Cardiac septum (tissue), 1 donor: ENCODE measurements at regions of chr17 and their contacts with region 1.

Region 1: GRCh38 chr17:36183001-36183971 is 6.8 kb upstream of the TBC1D3B start:
- DNase-seq: no peak

Region 2: GRCh38 chr17:36117505-36118382 is 65.5 kb before region 1 on chr17:
- intact Hi-C with region 1: loop called (anchors 10 kb)
- DNase-seq: no peak

Region 3: DNA sequence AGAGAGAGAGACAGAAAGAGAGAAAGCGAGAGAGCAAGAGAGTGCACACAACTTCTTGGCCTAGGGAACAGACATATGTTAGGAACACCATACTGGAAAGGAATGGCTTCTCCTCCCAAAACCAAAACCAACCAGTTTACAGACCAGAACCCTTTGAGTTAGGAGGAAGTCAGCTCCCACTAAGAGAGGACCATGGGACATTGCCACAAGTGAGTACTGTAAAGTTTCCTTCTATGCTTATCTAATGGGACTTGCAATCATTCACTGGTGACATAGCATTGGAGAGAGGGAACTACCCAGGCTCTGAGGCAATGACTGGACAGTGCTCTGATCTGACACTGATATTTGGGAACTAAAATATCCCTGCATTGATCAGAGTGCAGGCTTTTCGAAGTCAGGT is 39.3 kb before region 1 on chr17:
- intact Hi-C with region 1: no loop called
- DNase-seq: no peak

Region 4: DNA sequence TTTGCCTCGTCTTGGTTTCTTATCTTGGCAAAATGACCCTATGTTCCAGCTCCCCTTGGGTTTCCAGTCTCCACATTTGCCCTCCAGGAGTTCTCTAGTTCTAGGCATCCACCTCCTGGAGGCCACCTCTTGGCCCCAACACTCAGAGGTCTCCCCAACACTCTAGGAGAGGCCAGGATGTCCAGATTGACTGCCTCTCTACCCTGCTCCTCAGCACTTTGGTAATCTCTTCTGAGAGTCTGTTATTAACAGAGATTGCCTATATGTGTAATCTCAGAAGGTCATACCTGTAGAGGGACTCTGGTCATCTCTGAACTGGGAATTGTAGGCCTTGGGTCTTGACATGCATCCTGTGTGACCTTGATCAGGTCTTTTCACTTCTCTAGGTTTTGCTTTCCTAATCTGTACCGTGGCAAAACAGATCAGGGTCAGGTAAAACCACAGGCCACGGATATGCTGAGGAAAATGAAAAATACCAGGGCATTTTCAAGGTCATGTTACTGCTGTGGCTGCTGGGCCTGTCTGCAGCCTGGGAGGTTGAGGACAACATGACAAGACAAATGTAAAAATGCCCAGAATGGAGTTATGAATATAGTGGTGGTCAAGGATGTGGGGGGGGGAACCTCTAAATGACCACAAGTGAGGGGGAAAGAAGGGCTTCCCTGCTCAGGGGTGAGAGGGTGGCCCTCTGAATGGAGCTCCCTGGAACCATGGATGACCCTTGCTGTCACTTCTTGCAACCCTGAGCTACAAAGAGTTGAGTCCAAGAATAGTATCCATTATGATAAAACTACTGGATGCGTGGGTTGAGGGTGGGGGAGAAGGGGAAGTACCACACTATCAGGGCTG is 22.6 kb after region 1 on chr17:
- intact Hi-C with region 1: no loop called
- DNase-seq: no peak